ENCODE measurements at regions of chr14 and their contacts with region 1.

Region 1: GRCh38 chr14:57486767-57487379 is 6.8 kb downstream of the CCDC198 start:
- DNase-seq: peak in 1 of 6 donors; percentile 28
- ATAC-seq: peak in 3 of 4 donors; percentile 81 to 88 (median 86)
- H3K4me3 ChIP-seq: no peak overlapping the region
- H3K27ac ChIP-seq: no peak overlapping the region
- H3K4me1 ChIP-seq: peaks cover 0 to 3% (median 0%) of the 10 kb centered on the region in 3 donors
- H3K27me3 ChIP-seq: no peaks in the 10 kb centered on the region
- CTCF ChIP-seq: peak in 3 of 4 donors; percentile 36 to 51 (median 49)

Region 2: DNA sequence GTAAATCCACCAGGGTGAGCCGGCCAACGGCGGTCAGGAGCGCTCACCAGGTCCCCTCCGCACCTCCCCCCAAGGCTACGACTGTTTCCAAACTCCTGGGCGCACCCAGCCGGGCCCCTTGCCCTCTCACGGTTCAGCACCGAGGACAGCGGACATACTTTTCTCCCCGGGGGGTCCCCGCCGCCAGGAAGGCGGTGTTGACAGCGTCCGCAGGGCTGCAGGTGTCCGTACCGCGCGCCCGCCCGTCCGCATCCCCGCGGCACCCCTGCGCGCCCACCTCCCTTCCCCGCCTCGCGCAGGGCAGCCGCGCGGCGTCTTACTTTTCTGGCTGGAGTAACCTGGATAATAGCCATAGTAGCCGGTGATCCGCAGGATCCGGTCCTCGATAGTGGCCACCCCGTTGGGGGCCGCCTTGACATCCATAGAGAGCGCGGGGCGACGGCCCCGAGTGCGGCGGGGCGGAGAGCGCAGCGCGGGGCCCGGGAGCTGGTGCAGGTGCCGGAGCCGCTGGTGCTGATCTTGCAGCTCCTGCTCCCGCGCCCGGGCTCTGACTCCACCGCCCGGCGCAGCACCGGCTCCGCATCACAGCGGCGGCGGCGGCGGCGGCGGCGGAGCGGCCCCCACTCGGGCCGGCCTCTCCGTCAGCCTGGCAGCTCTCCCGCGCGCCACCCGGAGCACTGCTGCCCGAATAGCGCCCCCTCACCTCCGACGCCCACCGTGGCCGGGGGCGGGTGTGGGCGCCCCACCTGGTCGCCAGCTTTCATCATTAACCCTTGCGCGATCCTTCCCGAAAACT is 378.7 kb after region 1 on chr14 and contains the start of gene SLC35F4:
- intact Hi-C with region 1: loop called in 1 of 3 experiments (anchors 10 kb)
- DNase-seq: peak in 5 of 6 donors; percentile 27 to 77 (median 55)
- ATAC-seq: peak; percentile 73 to 86 (median 83)
- H3K4me3 ChIP-seq: peak within 1 kb of the TSS in 2 of 4 donors; percentile 24 to 41
- H3K27ac ChIP-seq: no peak within 1 kb of the TSS
- H3K4me1 ChIP-seq: peaks cover 0 to 7% (median 4%) of the 10 kb centered on the region in 3 donors
- H3K27me3 ChIP-seq: peaks cover 0 to 22% (median 0%) of the 10 kb centered on the region in 4 donors
- CTCF ChIP-seq: no peak
- total RNA-seq, gene SLC35F4: 0.16 to 0.31 TPM in 2 of 6 donors, not detected in the others

Region 3: GRCh38 chr14:58072288-58073071 is 585.6 kb after region 1 on chr14:
- intact Hi-C with region 1: loop called (anchors 5 to 10 kb)
- DNase-seq: peak in 4 of 6 donors; percentile 25 to 60 (median 34)
- ATAC-seq: peak; percentile 68 to 97 (median 94)
- H3K4me3 ChIP-seq: no peak overlapping the region
- H3K27ac ChIP-seq: no peak overlapping the region
- H3K4me1 ChIP-seq: peaks cover 0 to 12% (median 0%) of the 10 kb centered on the region in 3 donors
- H3K27me3 ChIP-seq: no peaks in the 10 kb centered on the region
- CTCF ChIP-seq: peak; percentile 24 to 66 (median 62)

Measured in pancreas (tissue), 10 donors.